H1 (cell line): ENCODE measurements at regions of chr15 and their contacts with region 1.

Region 1: GRCh38 chr15:88395872-88396781 is 71.1 kb downstream of the MRPL46 start:
- DNase-seq: no peak
- H3K4me3 ChIP-seq: no peak overlapping the region
- H3K27ac ChIP-seq: no peak overlapping the region
- H3K4me1 ChIP-seq: peaks cover 0 to 5% (median 3%) of the 10 kb centered on the region in 4 experiments; a peak in 3 of 7 replicates
- H3K27me3 ChIP-seq: no peaks in the 10 kb centered on the region; a peak in 1 of 7 replicates
- CTCF ChIP-seq: no peak
- EP300 ChIP-seq: no peak
- POLR2A ChIP-seq: no peak
- RAD21 ChIP-seq: no peak

Region 2: GRCh38 chr15:88208410-88208809 is 187.7 kb before region 1 on chr15:
- CTCF ChIA-PET with region 1: no interaction called
- POLR2A ChIA-PET with region 1: no interaction called
- DNase-seq: no peak
- H3K4me3 ChIP-seq: no peak overlapping the region
- H3K27ac ChIP-seq: no peak overlapping the region
- H3K4me1 ChIP-seq: peaks cover 0 to 6% (median 4%) of the 10 kb centered on the region in 4 experiments; a peak in 2 of 7 replicates
- H3K27me3 ChIP-seq: no peaks in the 10 kb centered on the region; a peak in 1 of 7 replicates
- CTCF ChIP-seq: no peak
- EP300 ChIP-seq: no peak
- POLR2A ChIP-seq: no peak
- RAD21 ChIP-seq: no peak

Region 3: DNA sequence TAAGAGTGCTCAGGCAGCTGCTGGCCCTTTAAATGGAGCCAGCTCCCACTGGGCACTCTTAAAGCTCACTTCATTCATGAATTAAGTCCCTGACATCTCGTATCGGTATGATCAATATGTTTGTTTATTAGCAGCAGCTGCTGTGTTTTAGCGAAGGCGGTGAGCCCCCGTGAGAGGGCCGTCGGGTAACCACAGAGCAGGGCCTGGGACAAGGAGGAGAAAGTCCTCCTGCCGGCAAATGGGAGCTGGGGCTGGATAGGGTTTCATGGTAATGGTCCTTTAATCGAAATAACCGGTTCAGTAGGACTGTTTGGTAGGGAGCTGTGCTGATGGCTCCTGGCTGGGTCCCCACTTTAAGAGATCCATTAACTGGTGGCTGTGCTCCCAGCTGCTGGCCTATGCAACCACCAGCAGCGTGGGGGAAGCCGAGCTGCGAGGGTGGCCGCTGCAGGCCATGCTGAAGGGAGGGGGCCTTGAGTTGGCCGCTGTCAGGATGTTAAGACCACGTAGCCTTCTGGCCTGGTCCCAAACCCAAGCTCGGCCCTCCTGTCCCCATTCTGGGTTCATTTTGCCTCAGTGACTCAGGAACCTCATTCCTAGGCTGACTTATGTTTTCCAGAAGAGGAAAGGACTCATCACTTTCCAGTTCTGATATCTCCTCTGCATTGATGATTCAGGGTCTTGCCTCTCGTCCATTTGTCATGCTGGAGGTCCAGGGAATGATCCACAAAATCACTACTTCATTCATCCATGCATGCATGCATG is 72.0 kb before region 1 on chr15:
- CTCF ChIA-PET with region 1: no interaction called
- POLR2A ChIA-PET with region 1: no interaction called
- DNase-seq: no peak
- H3K4me3 ChIP-seq: no peak overlapping the region
- H3K27ac ChIP-seq: no peak overlapping the region
- H3K4me1 ChIP-seq: no peaks in the 10 kb centered on the region
- H3K27me3 ChIP-seq: no peaks in the 10 kb centered on the region
- CTCF ChIP-seq: no peak
- EP300 ChIP-seq: no peak
- POLR2A ChIP-seq: no peak
- RAD21 ChIP-seq: no peak

Region 4: DNA sequence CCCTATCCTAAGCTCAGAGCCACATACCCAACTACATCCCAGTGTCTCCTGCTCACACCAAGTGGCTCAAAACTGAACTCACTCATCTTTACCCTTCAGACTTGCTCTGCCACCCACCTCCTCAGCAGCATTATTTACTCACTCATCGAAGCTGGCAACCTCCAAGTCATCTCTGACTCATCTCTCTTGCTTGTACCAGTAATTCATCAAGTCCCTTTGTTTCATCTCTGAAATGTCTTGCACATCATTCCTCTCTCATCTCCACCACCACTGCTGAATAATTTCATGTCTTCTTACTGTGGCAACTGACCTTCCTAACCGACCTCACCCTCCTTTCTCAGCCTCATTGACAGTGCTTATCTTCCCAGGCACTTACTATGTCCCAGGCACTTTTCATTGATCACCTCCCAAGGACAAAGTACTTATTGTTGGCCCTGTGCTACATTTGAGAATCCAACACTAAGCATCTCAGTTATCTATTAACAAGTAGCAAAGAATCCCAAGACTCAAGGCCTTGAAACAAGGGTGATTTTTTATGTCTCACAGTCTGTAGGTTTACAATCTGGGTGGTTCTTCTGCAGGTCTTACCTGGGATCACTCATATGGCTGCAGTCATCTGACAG is 10.9 kb before region 1 on chr15:
- CTCF ChIA-PET with region 1: interaction called, 21 read pairs
- POLR2A ChIA-PET with region 1: interaction called, 3 read pairs
- DNase-seq: no peak
- H3K4me3 ChIP-seq: no peak overlapping the region
- H3K27ac ChIP-seq: no peak overlapping the region
- H3K4me1 ChIP-seq: no peaks in the 10 kb centered on the region
- H3K27me3 ChIP-seq: peaks cover 0 to 1% (median 0%) of the 10 kb centered on the region in 4 experiments; a peak in 1 of 7 replicates
- CTCF ChIP-seq: no peak
- EP300 ChIP-seq: no peak
- POLR2A ChIP-seq: no peak
- RAD21 ChIP-seq: no peak

Region 5: DNA sequence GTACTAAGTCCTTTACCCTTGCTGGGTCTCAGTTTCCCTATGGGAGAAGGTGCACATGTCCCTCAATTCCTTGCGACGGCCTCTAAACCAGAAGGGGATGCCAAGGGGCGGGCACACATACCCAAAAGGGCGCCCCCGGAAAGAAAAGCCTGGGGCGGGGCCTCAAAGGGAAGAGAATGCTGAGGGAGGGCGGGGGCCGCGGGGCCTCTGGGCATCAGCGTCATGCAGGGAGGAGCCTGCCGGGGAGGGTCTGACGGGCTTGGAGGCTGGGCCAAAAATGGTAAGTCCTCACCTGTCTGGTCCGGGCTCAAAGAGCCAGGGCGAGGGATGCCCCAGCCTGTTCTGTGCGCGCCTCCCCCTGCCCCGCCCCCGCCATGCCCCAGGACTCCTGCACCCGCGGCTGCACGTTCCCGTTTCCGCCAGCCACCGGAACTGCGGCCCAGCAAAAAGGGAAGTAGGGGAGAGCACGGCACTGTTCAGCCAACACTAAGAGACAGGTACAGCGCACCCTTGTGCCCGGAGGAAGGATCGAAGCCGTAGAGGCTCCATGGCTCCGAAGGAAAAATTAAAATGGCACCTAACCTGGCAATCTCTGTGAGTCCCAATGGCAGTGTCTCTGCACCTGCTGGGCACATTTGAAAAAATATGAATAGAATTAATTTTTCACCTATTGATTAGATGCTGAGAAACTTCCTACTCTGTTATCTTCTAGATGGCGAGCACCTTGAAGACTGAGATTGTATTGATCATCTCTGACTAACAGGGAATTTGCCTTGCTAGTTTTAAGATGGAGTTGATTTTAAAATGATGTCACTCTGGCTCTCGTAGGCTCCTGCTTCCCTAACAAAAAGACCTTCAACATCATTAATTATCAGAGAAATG is 150.4 kb after region 1 on chr15 and contains the start of gene DET1:
- CTCF ChIA-PET with region 1: no interaction called
- POLR2A ChIA-PET with region 1: no interaction called
- DNase-seq: peak; percentile 89 to 91
- H3K4me3 ChIP-seq: peak within 1 kb of the TSS; percentile 47 to 69 (median 56)
- H3K27ac ChIP-seq: peak within 1 kb of the TSS; percentile 75; the same call in 1 of the 2 replicates
- H3K4me1 ChIP-seq: peaks cover 0 to 4% (median 0%) of the 10 kb centered on the region in 4 experiments; a peak in 2 of 7 replicates
- H3K27me3 ChIP-seq: no peaks in the 10 kb centered on the region
- CTCF ChIP-seq: peak; percentile 74 to 89 (median 83)
- EP300 ChIP-seq: peak in 1 of 2 experiments; percentile 12; a peak in 1 of 3 replicates
- POLR2A ChIP-seq: 0 out of 3 replicates have a peak, but pooled peaks of 1 of the 2 experiments have one; percentile 28
- RAD21 ChIP-seq: peak in 1 of 2 experiments; percentile 38; a peak in 3 of 4 replicates
- total RNA-seq, gene DET1: 5.4 and 6.1 TPM in 2 replicates

Region 6: DNA sequence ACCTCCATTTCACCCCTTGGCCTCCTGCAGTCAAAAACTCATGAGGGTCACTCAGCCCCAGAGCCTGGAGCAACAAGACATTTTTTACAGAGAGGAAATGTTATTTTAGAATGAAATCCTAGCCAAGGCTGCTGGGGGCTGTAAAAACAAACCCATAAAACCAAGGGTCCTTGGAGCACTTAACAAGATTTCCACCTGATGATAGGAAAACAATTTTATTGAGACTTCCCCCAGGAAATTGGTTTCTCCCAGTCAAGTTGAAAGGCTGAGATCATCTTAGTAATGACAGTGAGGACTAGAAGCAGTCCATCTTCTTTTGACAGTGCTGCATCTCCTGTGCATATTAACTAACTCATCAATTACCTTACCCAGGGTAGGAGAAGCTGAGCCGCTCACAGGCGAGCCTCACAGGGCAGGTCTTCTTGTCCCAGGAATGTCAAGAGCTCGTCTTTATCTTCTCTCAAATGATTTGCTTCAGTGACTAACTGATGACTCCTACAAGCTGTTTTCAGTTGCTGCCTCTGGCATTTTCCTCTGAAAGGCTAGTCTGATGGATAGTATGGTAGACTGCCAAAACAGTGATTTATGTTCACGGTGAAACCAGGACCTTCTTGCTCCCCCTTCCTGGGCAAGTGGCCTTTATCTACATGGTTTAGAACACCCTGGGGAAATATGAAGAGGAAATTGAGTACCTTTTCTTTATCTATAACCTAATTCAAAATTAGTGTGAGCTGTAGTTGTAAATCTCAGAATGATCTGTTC is 190.5 kb after region 1 on chr15:
- CTCF ChIA-PET with region 1: no interaction called
- POLR2A ChIA-PET with region 1: no interaction called
- DNase-seq: no peak
- H3K4me3 ChIP-seq: no peak overlapping the region
- H3K27ac ChIP-seq: no peak overlapping the region
- H3K4me1 ChIP-seq: no peaks in the 10 kb centered on the region
- H3K27me3 ChIP-seq: no peaks in the 10 kb centered on the region
- CTCF ChIP-seq: no peak
- EP300 ChIP-seq: no peak
- POLR2A ChIP-seq: no peak
- RAD21 ChIP-seq: no peak